Panc1 (cell line): ENCODE measurements at regions of chr13 and their contacts with region 1.

Region 1: GRCh38 chr13:60617991-60618733 is 221.1 kb downstream of the TDRD3 start:
- DNase-seq: no peak
- ATAC-seq: no peak
- H3K4me3 ChIP-seq: no peak overlapping the region
- H3K27ac ChIP-seq: no peak overlapping the region
- H3K4me1 ChIP-seq: no peaks in the 10 kb centered on the region
- H3K27me3 ChIP-seq: no peaks in the 10 kb centered on the region
- CTCF ChIP-seq: peak; percentile 46

Region 2: DNA sequence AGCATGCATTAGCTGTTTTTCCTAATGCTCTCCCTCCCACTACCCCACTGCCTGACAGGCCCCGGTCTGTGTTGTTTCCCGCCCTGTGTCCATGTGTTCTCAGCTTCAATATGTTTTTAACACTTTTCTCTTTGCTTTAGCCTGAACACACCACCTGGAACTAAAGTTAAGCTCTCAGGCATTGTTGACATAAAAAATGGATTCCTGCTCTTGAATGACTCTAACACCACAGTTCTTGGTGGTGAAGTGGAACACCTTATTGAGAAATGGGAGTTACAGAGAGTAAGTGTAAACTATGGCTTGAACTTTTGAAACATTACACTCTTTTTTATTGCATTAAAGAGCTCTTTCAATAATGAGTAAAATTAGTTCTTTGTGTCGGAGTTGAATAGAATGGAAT is 151.1 kb before region 1 on chr13:
- CTCF ChIA-PET with region 1: no interaction called
- POLR2A ChIA-PET with region 1: no interaction called
- in situ Hi-C with region 1: no loop called
- intact Hi-C with region 1: loop called (anchors 5 kb)
- DNase-seq: no peak
- ATAC-seq: no peak
- H3K4me3 ChIP-seq: no peak overlapping the region
- H3K27ac ChIP-seq: no peak overlapping the region
- H3K4me1 ChIP-seq: no peaks in the 10 kb centered on the region
- H3K27me3 ChIP-seq: no peaks in the 10 kb centered on the region
- CTCF ChIP-seq: no peak